GM13976 (cell line): ENCODE measurements at regions of chr6 and their contacts with region 1.

Region 1: DNA sequence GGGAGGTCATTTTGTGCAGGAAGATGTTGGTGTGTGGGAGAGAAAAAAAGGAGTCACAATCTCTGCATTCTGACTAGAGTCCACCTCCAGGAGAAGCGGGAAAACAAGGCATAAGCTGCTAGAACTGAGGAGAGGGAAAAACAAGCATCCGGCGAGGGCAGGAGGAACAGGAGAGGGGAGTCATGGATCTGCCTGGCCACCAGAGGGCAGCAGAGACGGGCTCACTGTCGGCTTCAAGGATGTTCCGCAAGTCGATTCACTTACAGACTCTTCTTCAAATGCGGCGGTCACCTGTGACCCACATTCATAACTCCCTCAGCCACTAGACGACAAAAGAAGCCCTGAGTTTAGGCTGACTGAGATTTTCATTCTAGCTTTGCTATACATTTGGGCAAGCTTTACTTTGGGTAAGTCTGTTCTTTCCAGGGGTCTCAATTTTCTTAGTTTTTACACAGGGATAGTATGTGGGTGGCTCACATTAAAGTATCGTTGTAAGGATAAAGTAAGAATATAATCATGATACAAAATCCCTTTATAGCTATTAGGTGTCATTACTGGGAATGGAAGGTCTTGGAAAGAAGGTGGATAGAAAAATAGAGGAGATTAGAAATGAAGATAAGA is 6.6 kb upstream of the BTNL2 start:
- DNase-seq: peak; percentile 78
- CTCF ChIP-seq: peak; percentile 84

Region 2: GRCh38 chr6:31752739-31753319 is 660.7 kb before region 1 on chr6:
- in situ Hi-C with region 1: no loop called
- DNase-seq: no peak
- CTCF ChIP-seq: no peak

Region 3: DNA sequence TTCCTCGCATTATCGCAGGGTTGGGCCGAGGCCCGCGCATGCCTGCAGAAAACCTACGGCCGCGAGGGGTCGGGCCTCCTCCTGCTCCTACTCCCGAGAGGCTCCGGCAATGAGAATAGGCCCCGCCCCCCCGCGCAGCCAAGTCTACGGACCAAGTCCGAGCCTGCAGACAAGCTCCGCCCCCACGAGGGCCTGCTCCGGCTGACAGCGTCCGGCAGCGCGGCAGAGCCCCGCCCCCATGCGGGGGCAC is 218.0 kb before region 1 on chr6:
- in situ Hi-C with region 1: no loop called
- DNase-seq: peak; percentile 98
- CTCF ChIP-seq: peak; percentile 5

Region 4: DNA sequence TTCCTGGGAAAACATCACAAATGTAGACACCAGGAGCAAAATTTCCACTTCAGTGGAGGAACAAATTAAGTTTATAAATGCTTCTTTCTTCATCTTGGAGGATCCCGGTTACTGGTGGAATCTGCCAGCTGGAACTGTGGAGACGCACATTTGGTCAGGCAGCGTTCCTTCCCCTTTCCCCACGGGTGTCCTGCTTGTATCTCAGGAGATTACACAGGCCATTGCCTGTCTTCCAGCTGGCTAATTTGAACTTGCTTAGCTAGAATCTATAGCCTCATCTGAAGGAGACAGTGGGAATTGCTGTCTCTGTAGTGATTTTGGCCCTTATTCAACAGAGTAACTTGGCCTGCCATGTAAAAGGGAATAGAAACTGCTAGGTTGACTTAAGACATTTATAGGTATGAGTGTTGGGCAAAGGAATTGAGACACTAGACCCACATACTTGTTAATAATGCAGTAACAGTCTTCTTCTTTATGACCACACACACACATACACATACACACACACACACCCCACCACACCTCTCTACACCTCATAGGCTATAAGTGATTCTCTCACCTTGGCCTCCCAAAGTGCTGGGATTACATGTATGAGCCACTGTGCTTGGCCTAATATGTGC is 76.2 kb before region 1 on chr6:
- in situ Hi-C with region 1: no loop called
- DNase-seq: no peak
- CTCF ChIP-seq: no peak

Region 5: DNA sequence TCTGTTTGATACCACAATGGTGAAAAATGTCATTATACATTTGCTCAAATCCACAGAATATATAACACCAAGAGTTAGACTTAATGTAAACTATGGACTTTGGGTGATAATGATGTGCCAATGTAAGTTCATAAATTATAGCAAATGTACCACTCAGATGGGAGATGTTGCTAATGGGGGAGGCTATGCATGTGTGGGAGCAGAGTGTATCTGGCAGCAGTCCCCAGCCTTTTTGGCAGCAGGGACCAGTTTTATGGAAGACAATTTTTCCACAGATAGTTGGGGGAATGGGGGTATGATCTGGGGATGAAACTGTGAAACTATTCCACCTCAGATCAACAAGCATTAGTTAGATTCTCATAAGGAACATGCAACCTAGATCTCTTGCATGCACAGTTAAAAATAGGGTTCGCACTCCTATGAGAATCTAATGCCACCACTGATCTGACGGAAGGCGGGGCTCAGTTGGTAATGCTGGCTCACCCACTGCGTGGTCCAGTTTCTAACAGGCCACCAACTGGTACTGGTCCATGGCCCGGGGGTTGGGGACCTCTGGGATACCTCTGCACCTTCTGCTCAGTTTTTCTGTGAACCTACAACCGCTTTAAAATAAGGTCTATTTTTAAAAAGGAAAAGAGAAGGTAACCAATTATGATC is 231.6 kb after region 1 on chr6:
- in situ Hi-C with region 1: no loop called
- DNase-seq: no peak
- CTCF ChIP-seq: no peak

Region 6: DNA sequence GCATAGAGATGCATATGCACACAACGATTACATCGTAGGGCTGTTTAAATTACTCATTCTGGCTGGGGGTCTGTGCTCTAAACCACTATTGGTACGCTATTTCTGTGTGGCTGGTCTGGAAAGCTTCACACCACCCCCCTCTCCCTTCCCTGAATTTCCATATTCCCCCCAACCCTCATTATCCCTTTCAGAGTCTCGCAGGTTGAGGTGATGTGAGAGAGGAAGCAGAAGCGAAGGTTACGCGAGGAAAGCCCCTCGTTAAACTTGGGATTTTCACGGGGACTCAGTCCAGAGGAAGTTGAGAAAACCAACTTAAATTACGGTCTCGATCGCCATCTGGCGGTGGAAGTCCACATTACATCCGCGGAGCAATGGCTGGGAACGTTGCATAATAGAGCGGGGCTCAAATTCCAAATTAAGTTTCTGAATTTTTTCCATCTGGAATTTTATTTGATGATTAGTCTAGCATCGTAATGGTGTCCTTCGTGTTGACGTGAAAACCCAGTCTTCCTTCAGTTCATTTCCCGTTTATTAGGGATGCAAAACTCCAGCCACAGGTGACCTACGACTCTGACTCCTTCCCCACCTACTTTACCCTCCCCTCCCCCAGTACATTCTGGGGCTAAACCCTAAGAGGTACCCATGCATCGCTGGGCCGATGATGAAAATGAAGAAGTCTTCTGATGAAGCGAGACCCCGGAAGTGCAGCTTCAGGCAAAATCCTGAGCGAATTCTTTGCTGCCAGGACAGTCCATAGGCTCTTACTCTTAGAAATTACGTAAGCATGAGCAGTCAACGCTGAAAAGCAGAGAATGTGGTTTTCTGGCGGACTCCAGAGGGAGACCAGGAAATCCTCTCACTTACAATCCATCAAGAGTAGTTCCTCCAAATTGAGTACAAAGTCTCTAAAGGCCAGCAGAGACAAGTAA is 383.6 kb after region 1 on chr6:
- in situ Hi-C with region 1: loop called (anchors 5 kb)
- DNase-seq: peak; percentile 53
- CTCF ChIP-seq: peak; percentile 93